ENCODE measurements at regions of chr11 and their contacts with region 1.

Region 1: GRCh38 chr11:63582935-63583677 is 19.9 kb upstream of the PLAAT2 start:
- DNase-seq: no peak
- H3K4me3 ChIP-seq: no peak overlapping the region
- H3K27ac ChIP-seq: no peak overlapping the region
- H3K4me1 ChIP-seq: peaks cover 17% of the 10 kb centered on the region
- H3K27me3 ChIP-seq: no peaks in the 10 kb centered on the region
- CTCF ChIP-seq: no peak

Region 2: DNA sequence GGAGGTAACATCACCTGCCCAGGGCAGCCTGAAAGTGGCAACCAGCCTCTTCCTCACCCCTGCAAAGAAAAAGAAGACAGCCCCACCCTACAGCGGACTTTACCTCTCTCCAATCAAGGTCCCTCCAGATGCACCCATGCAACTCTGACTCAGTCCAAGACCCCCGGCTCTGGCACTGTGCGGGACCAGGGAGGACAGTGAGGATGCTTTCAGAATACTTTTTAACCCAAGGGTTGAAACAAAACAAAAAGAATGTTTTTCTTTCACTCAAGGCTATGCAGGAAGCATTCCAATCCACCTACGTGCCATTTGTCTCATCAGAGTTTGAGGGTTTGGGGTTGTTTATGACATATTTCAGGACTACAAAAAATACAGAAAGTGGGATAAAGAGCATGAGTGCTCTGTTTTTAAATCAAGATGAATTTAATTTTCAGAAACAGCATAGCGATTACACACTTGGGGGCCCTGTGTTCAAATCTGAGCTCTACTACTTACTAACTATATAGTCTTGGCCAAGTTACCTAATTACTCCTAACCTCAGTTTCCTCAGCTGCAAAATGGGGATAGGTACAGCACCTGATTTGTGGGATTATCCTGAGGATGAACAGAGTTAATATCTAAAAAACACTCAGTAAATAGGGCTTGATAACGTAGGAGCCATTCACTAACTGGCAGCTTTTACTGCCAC is 25.4 kb after region 1 on chr11:
- CTCF ChIA-PET with region 1: interaction called, 3 read pairs
- POLR2A ChIA-PET with region 1: no interaction called
- intact Hi-C with region 1: loop called (anchors 1 kb)
- DNase-seq: peak; percentile 70 to 92
- H3K4me3 ChIP-seq: peak overlapping the region; percentile 33; the same call in 1 of the 2 replicates
- H3K27ac ChIP-seq: peak overlapping the region; percentile 89
- H3K4me1 ChIP-seq: peaks cover 64% of the 10 kb centered on the region
- H3K27me3 ChIP-seq: no peaks in the 10 kb centered on the region
- CTCF ChIP-seq: no peak

Measured in PC-9 (cell line).